Heart right ventricle (tissue), 16 donors: ENCODE measurements at regions of chr10 and their contacts with region 1.

Region 1: GRCh38 chr10:96153070-96153469 is 23.0 kb downstream of the ZNF518A start:
- DNase-seq: no peak
- ATAC-seq: no peak
- H3K4me3 ChIP-seq: no peak overlapping the region
- H3K27ac ChIP-seq: no peak overlapping the region
- H3K4me1 ChIP-seq: no peaks in the 10 kb centered on the region
- H3K27me3 ChIP-seq: no peaks in the 10 kb centered on the region
- CTCF ChIP-seq: no peak

Region 2: GRCh38 chr10:96038476-96039387 is 114.3 kb before region 1 on chr10:
- intact Hi-C with region 1: no loop called
- DNase-seq: no peak
- ATAC-seq: no peak
- H3K4me3 ChIP-seq: no peak overlapping the region
- H3K27ac ChIP-seq: no peak overlapping the region
- H3K4me1 ChIP-seq: peaks cover 0 to 9% (median 5%) of the 10 kb centered on the region in 9 donors
- H3K27me3 ChIP-seq: no peaks in the 10 kb centered on the region
- CTCF ChIP-seq: no peak

Region 3: DNA sequence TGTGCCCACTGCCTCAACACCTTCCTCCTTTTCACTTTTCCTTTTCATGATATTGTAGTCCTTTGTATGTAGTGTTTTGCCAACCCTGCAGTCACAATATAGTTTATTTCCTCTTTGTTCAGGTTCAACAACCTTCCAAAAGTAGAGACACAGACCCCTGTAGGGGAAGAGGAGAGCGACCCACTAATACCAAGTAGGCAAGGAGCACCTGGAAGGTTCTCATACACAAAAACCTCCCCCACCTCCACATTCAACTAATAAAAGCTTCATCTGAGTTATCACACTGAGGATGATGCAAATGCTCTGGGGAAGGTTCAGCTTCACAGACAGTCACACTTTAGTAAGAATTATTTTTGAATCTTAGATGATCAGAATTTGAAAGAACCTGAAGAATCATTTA is 525.7 kb after region 1 on chr10:
- intact Hi-C with region 1: loop called in 1 of 10 experiments (anchors 5 kb)
- DNase-seq: no peak
- ATAC-seq: no peak
- H3K4me3 ChIP-seq: no peak overlapping the region
- H3K27ac ChIP-seq: no peak overlapping the region
- H3K4me1 ChIP-seq: peaks cover 0 to 41% (median 0%) of the 10 kb centered on the region in 9 donors
- H3K27me3 ChIP-seq: peaks cover 0 to 4% (median 0%) of the 10 kb centered on the region in 7 donors
- CTCF ChIP-seq: no peak